ENCODE measurements at regions of chr5 and their contacts with region 1.

Region 1: DNA sequence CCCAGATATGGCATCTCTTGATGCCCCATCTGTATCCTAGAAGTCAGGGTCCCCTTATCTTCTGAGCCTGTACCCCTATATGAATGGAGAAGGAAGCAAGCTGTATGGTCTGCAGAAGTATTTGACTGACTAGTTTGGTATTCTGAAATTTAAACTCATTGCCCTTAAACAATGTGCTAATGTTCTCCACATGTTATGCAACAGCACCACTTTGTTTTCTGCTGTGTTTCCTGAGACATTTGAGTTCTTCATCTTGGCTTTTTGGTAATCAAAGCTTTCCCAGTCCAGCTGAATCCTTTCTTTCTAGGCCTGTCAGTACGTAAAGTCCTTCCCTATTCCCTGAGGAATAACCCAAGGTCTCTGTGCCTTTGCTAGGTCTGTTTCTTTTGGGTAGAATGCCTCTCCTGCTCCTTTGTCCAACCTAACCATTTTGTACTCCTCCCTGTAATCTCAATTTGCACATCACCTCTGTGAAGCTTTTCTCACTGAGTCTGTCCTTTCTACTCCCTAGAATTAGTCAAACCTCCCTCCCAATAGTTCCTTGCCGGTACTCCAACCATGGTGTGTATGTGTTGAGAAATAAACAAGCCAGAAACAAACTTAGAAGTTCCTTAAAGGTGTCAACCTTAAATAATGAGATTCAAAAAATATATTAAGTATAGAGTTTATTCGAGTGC is 72.1 kb upstream of the HSPB3 start:
- DNase-seq: peak; percentile 39
- H3K4me3 ChIP-seq: no peak overlapping the region
- H3K27ac ChIP-seq: no peak overlapping the region
- H3K4me1 ChIP-seq: peaks cover 16% of the 10 kb centered on the region
- H3K27me3 ChIP-seq: no peaks in the 10 kb centered on the region
- CTCF ChIP-seq: no peak

Region 2: DNA sequence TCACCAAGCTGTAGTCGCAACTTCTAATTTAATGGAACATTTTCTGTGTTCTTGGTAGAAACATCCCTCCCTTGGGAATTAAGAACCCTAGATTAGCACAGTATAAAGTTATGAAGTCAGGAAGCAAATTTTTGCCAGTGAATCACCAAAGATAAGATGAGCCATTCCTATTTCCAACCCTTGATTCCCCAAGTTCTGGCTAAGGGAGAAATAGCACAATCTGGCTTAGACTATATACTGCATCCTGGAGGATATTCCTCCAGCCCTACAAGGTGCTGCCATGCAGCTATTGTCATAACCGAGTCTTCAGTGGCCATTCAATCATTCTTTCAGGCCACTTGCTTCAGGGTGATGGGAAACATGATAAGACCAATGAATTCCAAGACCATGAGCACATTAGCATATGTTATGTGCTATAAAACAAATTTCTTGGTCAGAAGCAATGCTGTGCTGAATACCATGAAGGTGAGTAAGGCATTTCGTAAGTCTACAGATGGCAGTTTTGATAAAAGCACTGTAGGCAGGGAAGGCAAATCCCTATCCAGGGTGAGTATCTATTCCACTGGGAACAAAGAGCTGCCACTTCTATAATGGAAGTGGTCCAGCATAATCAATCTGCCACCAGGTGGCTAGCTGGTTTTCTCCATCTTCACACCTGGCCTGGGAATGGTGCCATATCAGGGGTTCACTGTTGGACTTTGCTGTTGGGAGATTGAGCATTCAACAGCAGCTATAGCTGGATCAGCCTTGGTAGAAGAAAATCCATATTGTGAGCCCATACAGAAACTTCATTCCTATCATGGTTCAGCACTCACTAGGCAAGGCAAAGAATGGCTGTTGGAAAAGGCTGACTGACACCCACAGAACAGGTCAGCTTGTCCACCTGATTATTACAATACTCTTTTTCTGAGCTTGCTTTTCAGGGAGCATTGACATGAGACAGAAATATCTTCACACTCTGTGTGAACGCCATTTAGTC is 53.3 kb before region 1 on chr5:
- CTCF ChIA-PET with region 1: no interaction called
- dilution Hi-C with region 1: no loop called
- in situ Hi-C with region 1: no loop called
- intact Hi-C with region 1: loop called (anchors 2 kb)
- DNase-seq: peak; percentile 93
- H3K4me3 ChIP-seq: no peak overlapping the region
- H3K27ac ChIP-seq: peak overlapping the region; percentile 2
- H3K4me1 ChIP-seq: peaks cover 16% of the 10 kb centered on the region
- H3K27me3 ChIP-seq: no peaks in the 10 kb centered on the region
- CTCF ChIP-seq: peak in 1 of 2 donors; percentile 28

Region 3: DNA sequence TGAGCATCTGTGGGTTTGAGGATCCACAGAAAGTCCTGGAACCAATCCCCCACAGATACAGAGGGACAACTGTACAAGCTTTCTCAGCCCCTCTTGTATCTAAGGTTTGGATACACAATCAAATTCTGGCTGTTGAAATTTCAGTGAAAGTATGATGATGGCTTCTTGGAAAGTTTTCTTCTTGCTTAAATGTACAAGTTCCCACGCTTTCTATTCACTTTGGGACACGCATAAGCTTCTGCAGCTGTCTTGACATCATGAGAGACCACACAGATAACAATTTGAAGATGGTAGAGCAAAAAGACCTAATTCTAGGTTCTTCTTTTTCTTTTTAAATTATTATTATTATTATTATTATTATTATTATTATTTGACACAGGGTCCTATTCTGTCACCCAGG is 41.4 kb before region 1 on chr5:
- CTCF ChIA-PET with region 1: no interaction called
- dilution Hi-C with region 1: no loop called
- in situ Hi-C with region 1: no loop called
- intact Hi-C with region 1: no loop called
- DNase-seq: no peak
- H3K4me3 ChIP-seq: no peak overlapping the region
- H3K27ac ChIP-seq: no peak overlapping the region
- H3K4me1 ChIP-seq: no peaks in the 10 kb centered on the region
- H3K27me3 ChIP-seq: no peaks in the 10 kb centered on the region
- CTCF ChIP-seq: no peak

Region 4: DNA sequence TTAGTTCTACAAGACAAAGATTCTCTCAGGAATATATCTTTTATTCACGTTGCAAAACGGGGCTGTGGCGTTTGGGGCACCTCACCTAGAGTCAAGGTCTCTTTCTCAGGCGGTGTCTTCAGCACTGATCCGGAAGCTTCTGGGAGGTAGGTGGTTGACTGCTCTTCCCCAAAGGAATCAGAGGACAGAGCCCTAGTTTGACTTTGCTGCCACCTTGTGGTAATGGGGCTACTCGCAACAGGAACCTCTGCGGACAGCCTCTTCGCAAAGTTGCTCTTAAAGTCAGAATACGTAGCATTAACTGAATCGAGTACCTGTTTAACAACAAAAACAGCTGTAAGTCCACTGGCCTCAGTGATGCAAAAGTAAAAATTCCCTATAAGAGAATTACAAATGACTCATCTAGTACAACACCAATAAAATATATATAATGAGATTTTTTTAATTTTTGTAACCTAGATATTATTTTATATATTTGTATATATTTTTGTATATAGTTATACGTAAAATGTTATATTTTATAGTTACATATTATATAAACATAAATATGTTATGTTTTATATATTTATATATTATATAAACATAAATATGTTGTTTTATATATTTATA is 763.3 kb after region 1 on chr5:
- CTCF ChIA-PET with region 1: no interaction called
- dilution Hi-C with region 1: no loop called
- in situ Hi-C with region 1: no loop called
- intact Hi-C with region 1: no loop called
- DNase-seq: peak; percentile 77
- H3K4me3 ChIP-seq: no peak overlapping the region
- H3K27ac ChIP-seq: no peak overlapping the region
- H3K4me1 ChIP-seq: no peaks in the 10 kb centered on the region
- H3K27me3 ChIP-seq: no peaks in the 10 kb centered on the region
- CTCF ChIP-seq: peak; percentile 89 to 98